Endothelial cell of umbilical vein (primary cell): ENCODE measurements at regions of chr1 and their contacts with region 1.

Region 1: GRCh38 chr1:221263831-221264767 is 384.9 kb downstream of the HLX start:
- DNase-seq: peak; percentile 79
- H3K4me3 ChIP-seq: no peak overlapping the region
- H3K27ac ChIP-seq: peak overlapping the region; percentile 34
- H3K4me1 ChIP-seq: peaks cover 7% of the 10 kb centered on the region
- H3K27me3 ChIP-seq: no peaks in the 10 kb centered on the region
- CTCF ChIP-seq: peak; percentile 64 to 71
- POLR2A ChIP-seq: no peak

Region 2: DNA sequence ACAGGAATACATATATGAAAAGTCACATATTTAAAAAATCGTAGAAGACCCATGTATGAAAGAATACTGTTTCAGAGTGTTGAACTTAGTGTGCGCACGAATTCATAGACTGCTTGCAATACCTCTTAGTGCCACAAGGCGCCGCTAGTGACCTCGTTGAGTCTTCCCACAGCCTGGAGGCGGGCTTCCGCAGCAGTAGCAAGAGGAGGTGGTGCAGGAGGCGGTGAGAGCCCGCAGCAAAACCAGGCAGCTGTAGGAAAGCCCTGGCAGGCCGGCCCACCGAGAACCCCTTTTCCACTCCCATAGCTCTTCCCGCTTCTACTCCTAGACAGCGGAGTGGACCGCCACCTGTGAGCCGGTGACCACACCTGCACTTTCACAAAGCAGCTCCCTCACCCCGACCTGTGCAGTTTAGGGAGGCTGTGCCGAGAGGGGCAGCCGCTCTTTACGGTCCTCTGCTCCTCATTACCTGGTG is 453.9 kb before region 1 on chr1:
- CTCF ChIA-PET with region 1: interaction called, 18 read pairs
- POLR2A ChIA-PET with region 1: no interaction called
- dilution Hi-C with region 1: no loop called
- intact Hi-C with region 1: loop called (anchors 5 kb)
- DNase-seq: peak; percentile 82
- H3K4me3 ChIP-seq: no peak overlapping the region
- H3K27ac ChIP-seq: no peak overlapping the region
- H3K4me1 ChIP-seq: peaks cover 8% of the 10 kb centered on the region
- H3K27me3 ChIP-seq: peaks cover 6 to 11% of the 10 kb centered on the region in 2 experiments
- CTCF ChIP-seq: peak; percentile 89 to 95
- POLR2A ChIP-seq: no peak

Region 3: DNA sequence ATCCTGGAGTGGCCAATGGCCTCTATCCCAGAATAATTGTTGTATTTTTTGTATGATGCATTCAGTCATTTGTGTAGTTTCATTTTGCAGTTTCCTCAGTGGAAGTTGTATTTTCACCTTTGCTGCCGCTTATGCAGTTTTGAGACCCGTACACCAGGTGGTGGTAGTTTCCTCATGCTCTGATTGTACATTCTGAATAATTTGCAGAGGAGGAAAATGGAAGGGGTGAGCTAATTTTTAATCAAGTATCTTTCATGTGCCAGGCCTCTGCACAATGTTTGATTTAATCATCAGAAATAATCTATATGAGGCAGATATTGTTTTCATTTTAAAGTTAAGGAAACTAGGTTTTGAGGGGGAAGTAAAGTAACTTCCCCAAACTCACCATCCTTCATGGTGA is 355.3 kb before region 1 on chr1:
- CTCF ChIA-PET with region 1: interaction called, 21 read pairs
- POLR2A ChIA-PET with region 1: no interaction called
- dilution Hi-C with region 1: no loop called
- intact Hi-C with region 1: no loop called
- DNase-seq: peak; percentile 38
- H3K4me3 ChIP-seq: no peak overlapping the region
- H3K27ac ChIP-seq: no peak overlapping the region
- H3K4me1 ChIP-seq: no peaks in the 10 kb centered on the region
- H3K27me3 ChIP-seq: peaks cover 9 to 11% of the 10 kb centered on the region in 2 experiments
- CTCF ChIP-seq: peak; percentile 9 to 44
- POLR2A ChIP-seq: no peak

Region 4: DNA sequence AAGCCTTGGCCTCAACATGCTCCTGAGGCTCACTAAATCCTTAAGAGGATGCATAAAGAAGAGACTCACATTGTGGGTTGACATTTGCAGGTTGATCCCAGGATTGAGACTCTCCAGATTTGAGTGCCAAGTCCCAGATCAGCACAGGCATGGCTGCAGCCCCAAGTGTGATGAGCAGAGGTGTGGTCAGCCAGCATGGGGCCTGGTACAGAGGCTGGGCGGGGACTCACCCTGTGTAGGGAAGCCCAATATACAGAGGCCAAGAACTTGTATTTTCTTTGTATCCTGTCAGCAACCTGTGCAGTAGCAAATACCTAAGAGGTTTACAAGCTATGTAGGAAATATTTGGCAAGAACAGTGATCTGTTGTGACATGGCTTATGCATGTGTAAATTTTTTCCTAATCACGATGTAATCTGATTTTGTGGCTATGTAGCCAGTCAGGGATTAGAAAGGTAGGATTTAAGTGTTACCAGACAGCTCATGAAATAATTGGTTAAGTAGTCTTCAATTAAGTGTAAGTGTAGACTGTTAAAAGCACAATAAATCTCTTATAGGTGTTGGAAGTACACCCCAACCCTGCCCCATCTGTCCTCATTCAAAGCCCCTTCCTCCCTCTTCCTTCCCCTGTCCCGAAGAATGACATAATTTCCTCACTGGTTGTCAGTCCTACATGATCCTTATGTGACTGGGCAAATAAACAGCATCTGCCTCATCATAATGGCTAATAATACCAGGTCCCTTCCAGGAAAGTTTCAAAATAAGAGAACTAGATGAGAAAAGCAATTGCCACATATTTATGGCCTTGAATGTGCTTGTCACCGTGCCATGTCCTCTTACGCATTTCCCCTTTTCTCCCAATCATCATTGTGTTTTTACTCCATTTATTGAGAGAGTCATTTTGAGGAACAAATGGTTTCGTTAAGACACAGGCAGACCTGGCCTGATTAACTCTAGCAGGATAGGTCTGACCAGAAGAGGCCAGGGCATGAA is 263.9 kb before region 1 on chr1:
- CTCF ChIA-PET with region 1: no interaction called
- POLR2A ChIA-PET with region 1: no interaction called
- dilution Hi-C with region 1: no loop called
- intact Hi-C with region 1: no loop called
- DNase-seq: no peak
- H3K4me3 ChIP-seq: no peak overlapping the region
- H3K27ac ChIP-seq: no peak overlapping the region
- H3K4me1 ChIP-seq: no peaks in the 10 kb centered on the region
- H3K27me3 ChIP-seq: no peaks in the 10 kb centered on the region
- CTCF ChIP-seq: no peak
- POLR2A ChIP-seq: no peak

Region 5: DNA sequence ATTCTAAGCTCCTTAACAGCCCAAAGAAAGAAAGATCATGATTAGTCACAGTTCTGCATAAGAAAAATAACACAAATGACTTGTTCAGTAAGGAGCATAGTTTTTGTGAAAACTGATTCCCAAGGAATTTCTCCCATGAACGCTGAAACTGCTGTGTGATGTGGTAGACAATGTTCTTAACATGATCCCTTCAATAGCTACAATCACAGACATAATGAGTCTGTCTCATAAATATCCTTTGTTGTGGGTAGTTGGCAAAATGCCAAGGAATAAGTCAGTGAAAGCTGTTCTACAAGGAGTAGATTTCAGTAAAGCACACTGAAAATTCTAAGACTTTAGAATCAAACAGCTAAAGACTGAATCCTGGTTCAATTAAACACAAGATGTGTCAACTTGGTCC is 19.9 kb after region 1 on chr1:
- CTCF ChIA-PET with region 1: interaction called, 16 read pairs
- POLR2A ChIA-PET with region 1: no interaction called
- dilution Hi-C with region 1: no loop called
- intact Hi-C with region 1: no loop called
- DNase-seq: peak; percentile 56
- H3K4me3 ChIP-seq: no peak overlapping the region
- H3K27ac ChIP-seq: no peak overlapping the region
- H3K4me1 ChIP-seq: no peaks in the 10 kb centered on the region
- H3K27me3 ChIP-seq: peaks cover 0 to 1% of the 10 kb centered on the region in 2 experiments
- CTCF ChIP-seq: no peak
- POLR2A ChIP-seq: no peak

Region 6: GRCh38 chr1:221419513-221420088 is 155.5 kb after region 1 on chr1:
- CTCF ChIA-PET with region 1: interaction called, 13 read pairs
- POLR2A ChIA-PET with region 1: no interaction called
- dilution Hi-C with region 1: no loop called
- intact Hi-C with region 1: no loop called
- DNase-seq: peak; percentile 60
- H3K4me3 ChIP-seq: no peak overlapping the region
- H3K27ac ChIP-seq: no peak overlapping the region
- H3K4me1 ChIP-seq: peaks cover 24% of the 10 kb centered on the region
- H3K27me3 ChIP-seq: no peaks in the 10 kb centered on the region
- CTCF ChIP-seq: no peak
- POLR2A ChIP-seq: no peak